ENCODE measurements at regions of chr16 and their contacts with region 1.

Region 1: DNA sequence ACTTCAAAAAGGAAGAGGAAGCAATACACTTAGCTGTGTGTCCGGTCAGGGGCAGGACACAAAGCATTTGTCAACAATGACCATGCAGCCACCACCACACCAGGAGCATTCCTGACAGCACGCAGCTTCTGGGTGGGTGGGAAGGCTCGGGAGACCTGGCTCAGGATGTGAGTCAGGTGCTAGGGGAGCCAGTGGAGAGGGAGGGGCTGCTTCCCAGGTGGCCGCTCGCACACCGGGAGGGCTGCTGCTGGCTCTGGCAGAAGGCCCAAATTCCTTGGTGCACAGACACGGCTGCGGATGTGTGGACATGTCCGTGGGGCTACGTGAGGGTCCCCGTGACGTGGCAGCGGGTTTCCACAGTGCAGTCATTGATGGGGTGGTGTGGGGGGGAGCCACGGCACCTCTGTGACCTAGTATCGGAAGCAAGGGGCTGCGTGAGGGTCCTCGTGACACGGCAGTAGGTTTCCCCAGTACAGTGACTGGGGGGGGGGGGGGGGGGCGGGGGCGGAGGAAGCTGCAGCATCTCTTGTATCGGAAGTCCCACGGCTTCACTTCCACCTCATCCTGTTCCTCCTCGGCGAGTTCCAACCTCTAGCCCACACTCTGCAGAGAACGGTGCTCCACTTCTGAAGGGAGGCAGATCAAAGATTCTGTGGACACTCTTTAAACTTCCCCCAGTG is 112.8 kb downstream of the ZNF778 start:
- DNase-seq: peak; percentile 46 to 70
- ATAC-seq: no peak
- H3K4me3 ChIP-seq: no peak overlapping the region
- H3K27ac ChIP-seq: no peak overlapping the region
- H3K4me1 ChIP-seq: peaks cover 0 to 3% of the 10 kb centered on the region in 2 donors
- H3K27me3 ChIP-seq: no peaks in the 10 kb centered on the region

Region 2: GRCh38 chr16:89507834-89508590 is 177.7 kb after region 1 on chr16 and contains the start of gene SPG7:
- intact Hi-C with region 1: loop called (anchors 5 kb)
- DNase-seq: peak; percentile 86 to 95
- ATAC-seq: peak; percentile 95
- H3K4me3 ChIP-seq: peak within 1 kb of the TSS; percentile 92 to 96
- H3K27ac ChIP-seq: peak within 1 kb of the TSS in 1 of 2 donors; percentile 60
- H3K4me1 ChIP-seq: no peaks in the 10 kb centered on the region
- H3K27me3 ChIP-seq: no peaks in the 10 kb centered on the region
- total RNA-seq, gene SPG7: 90.6 to 110 TPM

Region 3: DNA sequence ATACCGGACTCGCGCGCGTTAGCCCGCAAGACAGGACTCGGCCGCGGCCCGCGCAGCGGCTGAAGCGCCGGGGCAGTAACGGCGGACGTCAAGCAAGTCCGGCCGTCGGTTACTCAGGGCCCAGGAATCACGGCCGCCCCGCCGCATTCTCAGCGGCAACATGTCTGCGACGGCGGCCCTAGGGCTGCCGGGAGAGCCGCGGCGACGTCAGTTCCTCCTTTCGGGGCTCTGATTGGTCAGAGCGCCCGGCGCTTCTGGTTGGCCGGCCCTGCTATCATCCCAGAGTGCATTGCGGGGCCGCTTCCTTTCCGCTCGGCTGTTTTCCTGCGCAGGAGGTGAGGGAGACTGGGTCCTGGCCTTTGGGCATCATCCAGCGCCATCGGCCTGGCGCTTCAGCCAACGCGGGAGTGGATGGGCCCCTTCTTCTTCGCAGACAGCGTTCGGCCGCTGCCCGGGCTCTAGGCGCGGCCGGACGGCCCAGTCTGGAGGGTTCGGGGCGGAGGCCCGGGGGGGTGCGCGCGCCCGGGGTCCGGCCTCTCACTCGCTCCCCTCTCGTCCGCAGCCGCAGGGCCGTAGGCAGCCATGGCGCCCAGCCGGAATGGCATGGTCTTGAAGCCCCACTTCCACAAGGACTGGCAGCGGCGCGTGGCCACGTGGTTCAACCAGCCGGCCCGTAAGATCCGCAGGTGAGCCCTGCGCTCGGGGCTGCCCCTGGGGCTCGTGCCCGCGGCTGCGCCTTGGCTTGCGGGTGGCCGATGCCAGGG is 230.2 kb after region 1 on chr16 and contains the start of gene RPL13:
- intact Hi-C with region 1: loop called (anchors 5 kb)
- DNase-seq: peak; percentile 97 to 98
- ATAC-seq: peak; percentile 98
- H3K4me3 ChIP-seq: peak within 1 kb of the TSS; percentile 78 to 80
- H3K27ac ChIP-seq: peak within 1 kb of the TSS; percentile 83 to 88
- H3K4me1 ChIP-seq: no peaks in the 10 kb centered on the region
- H3K27me3 ChIP-seq: peaks cover 0 to under 1% of the 10 kb centered on the region in 2 donors
- total RNA-seq, gene RPL13: 1,505 to 1,678 TPM